ENCODE measurements at regions of chr1 and their contacts with region 1.

Region 1: DNA sequence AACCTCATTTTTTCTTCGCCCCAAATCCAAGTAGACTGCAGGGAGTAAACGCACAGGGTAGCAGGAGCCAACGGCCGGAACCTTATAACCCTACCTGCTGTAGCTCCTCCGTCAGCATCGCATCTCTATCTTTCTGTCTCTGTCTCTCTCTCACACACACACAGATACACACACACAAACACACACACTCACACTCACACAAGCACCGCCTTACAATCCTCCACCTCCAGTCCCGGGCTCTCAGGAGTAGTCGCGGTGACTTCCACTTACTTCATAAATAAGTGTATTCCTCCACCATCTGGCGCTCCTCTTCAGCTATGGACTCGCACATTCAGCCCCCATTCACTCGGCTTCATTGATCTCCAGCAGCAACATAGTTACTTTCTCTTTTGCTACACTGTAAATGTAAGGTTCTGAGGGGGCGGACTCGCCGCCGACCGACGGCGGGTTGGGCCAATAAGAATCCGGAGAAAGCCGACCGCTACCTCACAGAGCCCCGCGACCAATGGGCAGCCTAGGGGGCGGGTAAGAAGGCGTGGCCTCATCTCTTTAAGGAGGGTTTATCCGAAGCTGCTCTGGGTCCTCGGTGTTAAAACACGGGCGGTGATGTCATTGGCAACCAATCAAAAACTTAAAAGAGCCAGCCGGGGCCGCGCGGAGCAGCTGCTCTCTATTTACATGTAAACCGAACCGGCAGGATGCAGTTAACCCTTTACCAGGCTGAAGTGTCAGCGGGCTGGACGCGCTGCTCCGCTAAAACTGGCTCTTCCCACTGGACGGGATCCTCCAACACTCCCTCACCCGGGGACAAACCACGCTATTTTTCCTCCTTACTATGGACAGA is at the start of gene DUSP10:
- DNase-seq: peak; percentile 94
- ATAC-seq: peak; percentile 81
- H3K4me3 Mint-ChIP-seq: no peak within 1 kb of the TSS
- H3K27ac Mint-ChIP-seq: peak within 1 kb of the TSS; percentile 65
- H3K4me1 Mint-ChIP-seq: peaks cover 20% of the 10 kb centered on the region
- H3K27me3 Mint-ChIP-seq: no peaks in the 10 kb centered on the region
- CTCF ChIP-seq: no peak
- total RNA-seq, gene DUSP10: 36.6 and 39.5 TPM in 2 replicates

Region 2: GRCh38 chr1:221217029-221217428 is 524.9 kb before region 1 on chr1:
- CTCF ChIA-PET with region 1: no interaction called
- POLR2A ChIA-PET with region 1: no interaction called
- intact Hi-C with region 1: no loop called
- DNase-seq: no peak
- ATAC-seq: peak; percentile 52
- H3K4me3 Mint-ChIP-seq: peak overlapping the region; percentile 9
- H3K27ac Mint-ChIP-seq: no peak overlapping the region
- H3K4me1 Mint-ChIP-seq: peaks cover 14% of the 10 kb centered on the region
- H3K27me3 Mint-ChIP-seq: peaks cover 6% of the 10 kb centered on the region
- CTCF ChIP-seq: no peak

Region 3: DNA sequence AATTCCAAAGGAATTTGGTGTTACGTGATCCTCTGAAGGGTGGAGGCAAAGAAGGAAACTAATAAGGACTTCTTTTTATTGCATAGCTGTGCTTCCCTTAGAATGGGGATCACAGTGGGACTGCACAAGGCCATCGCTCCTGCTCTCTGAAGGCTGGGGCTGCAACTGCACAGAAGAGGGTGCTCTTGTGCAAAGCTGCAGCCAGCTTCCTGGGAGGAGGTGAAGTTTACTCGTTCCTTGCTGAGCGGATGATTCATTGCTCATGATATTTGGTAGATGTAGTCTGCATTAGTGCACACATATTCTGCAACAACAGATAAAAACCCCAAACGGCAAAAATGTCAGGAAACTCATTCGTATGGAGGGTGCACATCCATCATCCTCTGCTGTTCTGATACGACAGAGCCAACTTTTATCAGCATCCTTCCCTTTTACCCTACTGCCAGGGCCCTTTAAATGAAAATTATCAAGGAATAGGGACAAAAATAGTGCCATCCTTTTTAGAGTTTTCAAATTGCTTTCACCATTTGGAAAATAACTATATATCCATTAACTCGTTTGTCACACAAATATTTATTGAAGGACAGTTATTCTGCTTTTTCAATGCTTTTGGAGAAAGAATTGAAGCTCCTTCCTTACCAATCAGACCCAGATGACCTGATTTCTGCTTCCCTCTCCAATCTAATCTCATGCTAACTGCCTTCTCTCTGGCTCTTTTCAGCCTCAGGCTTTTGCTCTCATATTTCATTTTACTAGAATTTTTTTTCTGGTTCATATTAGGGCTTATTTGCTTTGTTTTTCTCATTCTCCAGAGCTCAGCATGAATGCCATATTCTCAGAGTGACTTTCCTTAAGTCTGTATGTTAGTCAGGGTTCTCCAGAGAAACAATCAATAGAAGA is 263.6 kb before region 1 on chr1:
- CTCF ChIA-PET with region 1: interaction called, 13 read pairs
- POLR2A ChIA-PET with region 1: interaction called, 16 read pairs
- intact Hi-C with region 1: loop called (anchors 2 kb)
- DNase-seq: peak; percentile 27
- ATAC-seq: peak; percentile 93
- H3K4me3 Mint-ChIP-seq: no peak overlapping the region
- H3K27ac Mint-ChIP-seq: no peak overlapping the region
- H3K4me1 Mint-ChIP-seq: peaks cover 4% of the 10 kb centered on the region
- H3K27me3 Mint-ChIP-seq: peaks cover 4% of the 10 kb centered on the region
- CTCF ChIP-seq: no peak

Region 4: DNA sequence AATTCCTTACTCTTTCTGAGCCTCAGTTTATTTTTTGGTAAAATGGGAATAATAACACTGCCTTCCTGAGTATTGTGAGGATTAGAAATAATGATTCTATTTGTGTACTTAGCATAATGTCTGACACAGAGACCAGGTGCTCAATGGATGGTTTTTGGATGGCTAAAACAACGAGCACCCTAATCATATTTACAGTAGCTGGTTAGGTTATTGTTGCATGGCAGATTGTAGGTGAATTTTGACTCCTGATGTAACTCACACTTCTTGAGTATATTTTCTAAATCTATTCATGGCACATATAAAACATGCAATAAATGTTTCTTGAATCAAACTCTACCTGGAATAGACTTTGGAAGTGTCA is 11.9 kb after region 1 on chr1:
- CTCF ChIA-PET with region 1: no interaction called
- POLR2A ChIA-PET with region 1: interaction called, 76 read pairs
- intact Hi-C with region 1: loop called (anchors 1 kb)
- DNase-seq: no peak
- ATAC-seq: peak; percentile 4
- H3K4me3 Mint-ChIP-seq: peak overlapping the region; percentile 71
- H3K27ac Mint-ChIP-seq: peak overlapping the region; percentile 89
- H3K4me1 Mint-ChIP-seq: peaks cover 50% of the 10 kb centered on the region
- H3K27me3 Mint-ChIP-seq: no peaks in the 10 kb centered on the region
- CTCF ChIP-seq: no peak

Region 5: GRCh38 chr1:221824025-221824424 is 82.1 kb after region 1 on chr1:
- CTCF ChIA-PET with region 1: interaction called, 5 read pairs
- POLR2A ChIA-PET with region 1: interaction called, 13 read pairs
- intact Hi-C with region 1: loop called (anchors 1 kb)
- DNase-seq: no peak
- ATAC-seq: peak; percentile 40
- H3K4me3 Mint-ChIP-seq: peak overlapping the region; percentile 58
- H3K27ac Mint-ChIP-seq: peak overlapping the region; percentile 85
- H3K4me1 Mint-ChIP-seq: peaks cover 67% of the 10 kb centered on the region
- H3K27me3 Mint-ChIP-seq: no peaks in the 10 kb centered on the region
- CTCF ChIP-seq: no peak

Region 6: GRCh38 chr1:221939607-221940006 is 197.7 kb after region 1 on chr1:
- CTCF ChIA-PET with region 1: interaction called, 6 read pairs
- POLR2A ChIA-PET with region 1: interaction called, 25 read pairs
- intact Hi-C with region 1: loop called (anchors 1 kb)
- DNase-seq: peak; percentile 49
- ATAC-seq: peak; percentile 95
- H3K4me3 Mint-ChIP-seq: peak overlapping the region; percentile 66
- H3K27ac Mint-ChIP-seq: peak overlapping the region; percentile 79
- H3K4me1 Mint-ChIP-seq: peaks cover 41% of the 10 kb centered on the region
- H3K27me3 Mint-ChIP-seq: no peaks in the 10 kb centered on the region
- CTCF ChIP-seq: no peak

Region 7: DNA sequence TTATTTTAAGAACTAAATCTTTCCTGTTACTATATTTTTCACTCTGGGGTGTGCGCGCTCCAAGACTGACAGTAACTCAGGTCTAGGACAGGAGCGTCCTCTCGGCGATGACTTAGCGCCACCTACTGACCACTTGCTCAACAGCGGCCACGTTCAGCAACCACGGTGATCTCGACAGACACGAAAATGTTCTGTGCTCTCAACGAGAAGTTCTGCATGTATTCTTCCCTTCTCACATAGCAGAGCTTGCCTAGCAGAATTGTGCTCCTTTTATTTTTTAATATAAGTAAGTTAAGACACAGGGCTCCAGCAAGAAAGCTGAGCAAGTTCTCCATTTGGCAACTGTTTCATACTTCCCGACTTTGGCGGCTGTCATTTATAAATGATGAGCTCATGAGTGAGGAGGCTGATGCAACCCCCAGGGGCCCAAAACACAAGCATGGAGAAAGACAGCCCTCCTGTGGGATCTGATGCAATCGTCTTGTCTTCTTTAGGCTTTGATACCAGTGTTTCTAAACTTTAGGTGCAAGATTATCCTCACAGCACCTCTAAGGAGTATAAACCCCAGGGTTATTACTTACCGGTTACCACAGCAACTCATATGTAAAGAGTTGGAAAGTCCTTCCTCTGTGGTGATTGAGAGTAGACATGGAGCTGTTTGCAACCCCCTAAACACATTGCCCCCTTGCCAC is 713.4 kb after region 1 on chr1:
- CTCF ChIA-PET with region 1: interaction called, 13 read pairs
- POLR2A ChIA-PET with region 1: interaction called, 6 read pairs
- intact Hi-C with region 1: loop called (anchors 1 kb)
- DNase-seq: peak; percentile 63
- ATAC-seq: peak; percentile 97
- H3K4me3 Mint-ChIP-seq: peak overlapping the region; percentile 1
- H3K27ac Mint-ChIP-seq: peak overlapping the region; percentile 20
- H3K4me1 Mint-ChIP-seq: peaks cover 12% of the 10 kb centered on the region
- H3K27me3 Mint-ChIP-seq: peaks cover 1% of the 10 kb centered on the region
- CTCF ChIP-seq: peak; percentile 85